ENCODE measurements at regions of chr6 and their contacts with region 1.

Region 1: GRCh38 chr6:68876792-68877493 is 241.9 kb downstream of the ADGRB3 start:
- DNase-seq: no peak
- H3K4me3 Mint-ChIP-seq: no peak overlapping the region
- H3K27ac Mint-ChIP-seq: no peak overlapping the region
- H3K4me1 Mint-ChIP-seq: no peaks in the 10 kb centered on the region
- H3K27me3 Mint-ChIP-seq: no peaks in the 10 kb centered on the region
- CTCF ChIP-seq: peak; percentile 46

Region 2: GRCh38 chr6:68958327-68958726 is 81.4 kb after region 1 on chr6:
- CTCF ChIA-PET with region 1: no interaction called
- intact Hi-C with region 1: loop called (anchors 1 kb)
- DNase-seq: no peak
- H3K4me3 Mint-ChIP-seq: no peak overlapping the region
- H3K27ac Mint-ChIP-seq: no peak overlapping the region
- H3K4me1 Mint-ChIP-seq: no peaks in the 10 kb centered on the region
- H3K27me3 Mint-ChIP-seq: no peaks in the 10 kb centered on the region
- CTCF ChIP-seq: peak; percentile 37

Region 3: DNA sequence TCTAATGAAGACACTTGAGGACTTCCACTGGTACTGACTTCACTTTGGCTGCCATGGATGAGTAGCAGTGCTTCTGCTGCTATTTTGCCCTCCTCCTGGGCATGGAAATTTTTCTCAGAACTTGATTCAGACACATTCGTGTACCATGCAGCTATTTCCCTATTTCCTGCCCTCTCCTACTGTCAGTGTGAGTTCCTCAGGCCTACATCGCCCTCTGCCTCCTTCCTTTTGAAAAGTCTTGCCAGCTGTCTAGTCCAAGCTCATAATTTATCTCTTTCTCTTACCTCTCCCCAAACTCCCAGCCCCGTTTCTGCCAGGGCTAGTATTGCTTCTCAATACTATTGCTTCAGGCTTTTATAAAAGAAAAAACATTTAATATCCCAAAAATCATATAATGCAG is 228.3 kb after region 1 on chr6:
- CTCF ChIA-PET with region 1: no interaction called
- intact Hi-C with region 1: loop called (anchors 1 kb)
- DNase-seq: peak; percentile 39
- H3K4me3 Mint-ChIP-seq: no peak overlapping the region
- H3K27ac Mint-ChIP-seq: no peak overlapping the region
- H3K4me1 Mint-ChIP-seq: peaks cover 10% of the 10 kb centered on the region
- H3K27me3 Mint-ChIP-seq: no peaks in the 10 kb centered on the region
- CTCF ChIP-seq: no peak

Region 4: DNA sequence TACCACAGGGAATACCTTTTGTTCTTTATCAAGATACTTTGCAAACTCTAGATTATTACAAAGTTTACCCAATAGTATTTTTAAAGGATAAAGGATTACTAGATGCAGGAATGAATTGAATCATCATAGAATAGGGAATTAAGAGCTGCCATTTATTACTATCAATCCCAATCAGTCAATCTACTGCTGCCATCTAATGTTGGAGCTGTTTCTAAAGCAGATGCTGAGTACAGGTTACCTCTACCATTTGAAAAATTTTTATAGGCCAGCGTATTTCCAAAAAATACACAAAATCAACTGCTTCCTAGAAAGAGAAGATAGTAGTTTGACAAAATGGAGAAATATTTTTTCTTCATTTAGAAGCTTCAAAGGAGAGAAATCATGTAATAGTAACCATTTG is 278.5 kb after region 1 on chr6:
- CTCF ChIA-PET with region 1: no interaction called
- intact Hi-C with region 1: loop called (anchors 1 kb)
- DNase-seq: no peak
- H3K4me3 Mint-ChIP-seq: no peak overlapping the region
- H3K27ac Mint-ChIP-seq: no peak overlapping the region
- H3K4me1 Mint-ChIP-seq: peaks cover 9% of the 10 kb centered on the region
- H3K27me3 Mint-ChIP-seq: no peaks in the 10 kb centered on the region
- CTCF ChIP-seq: no peak

Region 5: DNA sequence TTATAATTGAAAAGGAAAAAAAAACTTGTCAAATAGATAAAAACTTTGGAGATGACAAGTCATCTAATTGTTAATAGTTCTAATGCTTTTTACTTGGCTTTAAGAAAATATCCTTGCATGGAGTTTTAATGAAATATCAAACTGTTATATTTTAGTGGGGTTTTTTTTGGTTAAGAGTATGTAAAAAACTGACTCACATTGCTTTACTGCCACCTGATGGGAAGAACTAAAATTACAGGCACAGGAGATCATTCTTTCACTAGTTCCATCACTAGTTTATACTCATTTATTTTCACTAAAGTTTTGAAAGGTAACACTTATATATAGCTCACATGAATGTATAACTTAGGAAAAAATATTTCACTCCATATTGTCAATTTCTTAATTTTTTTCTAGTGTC is 610.7 kb after region 1 on chr6:
- CTCF ChIA-PET with region 1: no interaction called
- intact Hi-C with region 1: loop called (anchors 5 kb)
- DNase-seq: no peak
- H3K4me3 Mint-ChIP-seq: no peak overlapping the region
- H3K27ac Mint-ChIP-seq: no peak overlapping the region
- H3K4me1 Mint-ChIP-seq: no peaks in the 10 kb centered on the region
- H3K27me3 Mint-ChIP-seq: no peaks in the 10 kb centered on the region
- CTCF ChIP-seq: peak; percentile 30

Region 6: DNA sequence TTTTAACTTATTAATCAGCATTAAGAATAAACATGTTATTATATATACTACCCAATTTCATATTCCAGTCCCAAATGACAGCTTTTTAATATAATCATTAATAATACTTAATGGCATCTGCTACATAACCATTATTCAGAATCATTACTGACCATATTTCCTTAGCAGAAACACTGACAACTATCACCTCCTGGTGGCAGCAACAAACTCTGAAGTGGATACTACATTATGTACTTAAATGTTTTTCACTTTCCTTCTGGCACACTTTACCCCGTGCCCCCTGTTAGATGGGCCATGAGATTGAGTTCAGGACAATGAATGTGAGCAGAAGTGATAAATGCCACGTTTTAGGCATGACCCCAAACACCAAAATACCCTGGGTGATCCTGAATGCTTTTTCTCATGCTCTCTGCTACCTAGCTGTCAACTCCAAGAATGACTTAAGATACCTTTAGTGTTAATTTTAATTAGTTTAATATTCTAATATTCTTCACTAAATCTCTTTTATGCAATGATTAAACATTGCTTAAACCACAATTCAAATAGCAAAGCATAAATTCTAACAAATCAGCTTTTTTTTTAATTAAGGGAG is 842.8 kb after region 1 on chr6:
- CTCF ChIA-PET with region 1: no interaction called
- intact Hi-C with region 1: loop called (anchors 5 kb)
- DNase-seq: peak; percentile 41
- H3K4me3 Mint-ChIP-seq: no peak overlapping the region
- H3K27ac Mint-ChIP-seq: no peak overlapping the region
- H3K4me1 Mint-ChIP-seq: no peaks in the 10 kb centered on the region
- H3K27me3 Mint-ChIP-seq: no peaks in the 10 kb centered on the region
- CTCF ChIP-seq: peak; percentile 44